ENCODE measurements at regions of chr1 and their contacts with region 1.

Region 1: GRCh38 chr1:226882631-226883409 is 12.4 kb downstream of the PSEN2 start:
- DNase-seq: peak; percentile 40
- H3K4me3 Mint-ChIP-seq: peak overlapping the region; percentile 48
- H3K27ac Mint-ChIP-seq: peak overlapping the region; percentile 87
- H3K4me1 Mint-ChIP-seq: peaks cover 60% of the 10 kb centered on the region
- H3K27me3 Mint-ChIP-seq: no peaks in the 10 kb centered on the region

Region 2: DNA sequence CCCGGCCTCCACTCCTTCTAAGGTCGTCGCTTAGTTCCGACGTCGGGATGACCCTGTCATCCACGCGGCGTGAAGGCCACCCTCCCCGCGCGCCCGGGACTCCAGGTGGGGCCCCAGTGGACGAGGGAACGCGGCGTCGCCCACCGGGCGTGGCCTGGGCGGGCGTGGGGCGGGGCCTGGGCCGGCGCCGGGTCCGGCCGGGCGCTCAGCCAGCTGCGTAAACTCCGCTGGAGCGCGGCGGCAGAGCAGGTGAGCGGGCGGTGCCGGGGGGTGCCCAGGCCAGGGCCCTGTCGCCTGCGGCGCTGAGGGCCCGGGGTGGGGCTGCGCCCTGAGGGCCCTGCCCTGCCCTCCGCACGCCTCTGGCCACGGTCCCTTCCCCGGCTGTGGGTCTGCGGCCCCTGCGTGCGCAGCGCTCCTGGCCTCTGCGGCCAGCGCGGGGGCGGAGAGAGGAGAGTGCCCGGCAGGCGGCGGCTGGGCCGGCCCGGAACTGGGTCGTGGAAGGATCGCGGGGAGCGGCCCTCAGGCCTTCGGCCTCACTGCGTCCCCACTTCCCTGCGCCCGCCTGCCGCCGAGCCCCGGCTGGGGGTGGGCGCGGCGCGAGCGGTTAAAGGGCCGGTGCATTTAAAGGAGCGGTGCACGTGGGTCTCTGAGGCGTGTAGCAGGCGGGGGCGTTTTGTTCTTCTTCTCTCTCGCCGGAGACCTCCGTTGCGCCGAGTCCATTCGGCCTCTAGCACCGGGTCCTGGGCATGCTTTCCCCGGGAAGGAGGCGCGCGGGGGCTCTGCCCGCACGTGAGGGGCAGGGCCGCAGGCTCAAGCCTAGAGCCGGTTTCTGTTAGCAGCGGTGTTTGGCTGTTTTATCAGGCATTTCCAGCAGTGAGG is 12.2 kb before region 1 on chr1 and contains the start of gene PSEN2:
- intact Hi-C with region 1: loop called (anchors 1 kb)
- DNase-seq: peak; percentile 71
- H3K4me3 Mint-ChIP-seq: peak within 1 kb of the TSS; percentile 81
- H3K27ac Mint-ChIP-seq: peak within 1 kb of the TSS; percentile 55
- H3K4me1 Mint-ChIP-seq: peaks cover 22% of the 10 kb centered on the region
- H3K27me3 Mint-ChIP-seq: peaks cover 26% of the 10 kb centered on the region
- total RNA-seq, gene PSEN2: 13.5 and 14.3 TPM in 2 replicates

Region 3: GRCh38 chr1:226915672-226915995 is 32.8 kb after region 1 on chr1:
- intact Hi-C with region 1: loop called (anchors 1 kb)
- DNase-seq: no peak
- H3K4me3 Mint-ChIP-seq: no peak overlapping the region
- H3K27ac Mint-ChIP-seq: peak overlapping the region; percentile 7
- H3K4me1 Mint-ChIP-seq: peaks cover 28% of the 10 kb centered on the region
- H3K27me3 Mint-ChIP-seq: no peaks in the 10 kb centered on the region

Region 4: DNA sequence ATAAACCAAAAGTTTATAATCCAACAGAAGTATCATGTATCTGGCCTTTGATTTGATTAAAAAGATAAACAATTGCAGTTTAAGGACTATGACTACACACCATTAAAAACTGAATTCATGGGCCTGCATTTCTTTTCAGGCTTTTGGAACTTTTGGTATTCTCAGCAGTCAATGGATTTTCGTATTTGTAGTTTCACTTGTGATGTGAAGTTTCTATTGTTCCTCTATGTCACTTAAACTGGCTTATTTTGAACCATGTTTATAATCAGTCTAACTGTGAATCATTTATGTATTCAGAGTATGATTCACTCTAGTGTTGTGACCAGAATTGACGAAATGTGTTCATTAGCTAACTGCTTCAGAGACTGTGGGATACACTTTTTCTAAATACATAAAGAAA is 190.2 kb after region 1 on chr1:
- intact Hi-C with region 1: loop called (anchors 1 kb)
- DNase-seq: no peak
- H3K4me3 Mint-ChIP-seq: no peak overlapping the region
- H3K27ac Mint-ChIP-seq: no peak overlapping the region
- H3K4me1 Mint-ChIP-seq: peaks cover 6% of the 10 kb centered on the region
- H3K27me3 Mint-ChIP-seq: peaks cover 9% of the 10 kb centered on the region

Measured in activated T-helper 1 cell treated with anti-CD3 and anti-CD28 coated beads, Interleukin-12 subunit alpha, Interleukin-12 subunit beta, Interleukin-2, Interleukin-4 antibody, amounts not matched to agents 30 ng/mL and 10 ng/mL and 1 ng/mL, durations not matched to agents 14 hours and 24 hours and 36 hours (primary cell).